Right ventricle myocardium inferior (tissue), 1 donor: ENCODE measurements at regions of chr1 and their contacts with region 1.

Region 1: GRCh38 chr1:58401991-58402390 is 144.5 kb downstream of the OMA1 start:
- DNase-seq: no peak
- ATAC-seq: no peak

Region 2: GRCh38 chr1:58352476-58353092 is 49.4 kb before region 1 on chr1:
- intact Hi-C with region 1: no loop called
- DNase-seq: no peak
- ATAC-seq: no peak

Region 3: GRCh38 chr1:58465825-58466629 is 64.0 kb after region 1 on chr1:
- intact Hi-C with region 1: loop called (anchors 5 kb)
- DNase-seq: no peak
- ATAC-seq: no peak

Region 4: DNA sequence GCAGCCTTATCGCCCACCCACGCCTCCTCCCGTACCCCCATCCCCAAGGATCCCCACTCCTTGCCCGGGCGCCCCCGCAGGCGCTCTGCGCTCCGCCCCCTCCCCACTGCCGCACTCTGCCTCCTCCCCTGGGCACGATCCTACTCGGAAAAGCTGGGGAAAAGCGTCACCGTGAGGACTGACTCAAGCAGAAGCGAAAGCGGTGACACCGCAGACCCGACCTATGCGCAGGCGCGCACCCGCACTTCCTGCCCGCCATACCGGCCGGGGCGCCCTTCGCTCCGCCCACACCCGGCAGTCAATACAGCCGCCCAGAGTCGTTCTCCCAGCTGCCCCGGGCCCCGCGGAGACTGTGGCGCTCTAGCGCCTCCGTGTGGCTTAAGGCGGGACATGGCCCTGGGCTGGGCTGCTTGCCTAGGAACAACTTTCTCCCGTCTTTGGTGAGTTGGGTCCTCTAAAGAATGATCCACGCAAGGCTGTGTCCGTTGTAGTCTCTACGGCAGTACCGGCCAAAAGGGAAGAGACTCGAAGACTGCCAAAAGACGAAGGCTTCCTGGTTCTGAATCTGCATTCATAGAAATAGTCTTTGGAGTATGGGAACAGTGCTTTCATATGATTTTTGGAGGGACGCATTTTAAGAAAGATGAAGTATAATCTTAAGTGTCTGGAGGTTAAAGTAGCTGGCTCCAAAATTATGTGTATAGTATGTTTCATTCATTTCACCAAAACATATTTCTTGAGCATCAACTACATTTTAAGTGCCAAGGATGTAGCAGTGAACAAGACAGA is 144.7 kb after region 1 on chr1 and contains the start of gene OMA1:
- intact Hi-C with region 1: no loop called
- DNase-seq: peak; percentile 99
- ATAC-seq: peak; percentile 99
- total RNA-seq, gene OMA1: 27.8 TPM